Activated B cell treated with CpG ODN at 0.5 μM for 24 hours (primary cell): ENCODE measurements at regions of chr2 and their contacts with region 1.

Region 1: GRCh38 chr2:96305091-96305978 is at the start of gene SNRNP200:
- DNase-seq: peak; percentile 84
- ATAC-seq: peak; percentile 95
- H3K4me3 Mint-ChIP-seq: peak within 1 kb of the TSS; percentile 97
- H3K27ac Mint-ChIP-seq: peak within 1 kb of the TSS; percentile 97
- H3K4me1 Mint-ChIP-seq: peaks cover 45% of the 10 kb centered on the region
- H3K27me3 Mint-ChIP-seq: no peaks in the 10 kb centered on the region
- CTCF ChIP-seq: no peak
- total RNA-seq, gene SNRNP200: 185 and 208 TPM in 2 replicates

Region 2: GRCh38 chr2:96320728-96321622 is 15.6 kb after region 1 on chr2:
- CTCF ChIA-PET with region 1: interaction called, 3 read pairs
- POLR2A ChIA-PET with region 1: interaction called, 44 read pairs
- intact Hi-C with region 1: loop called (anchors 1 kb)
- DNase-seq: peak; percentile 34
- ATAC-seq: peak; percentile 15
- H3K4me3 Mint-ChIP-seq: peak overlapping the region; percentile 94
- H3K27ac Mint-ChIP-seq: peak overlapping the region; percentile 85
- H3K4me1 Mint-ChIP-seq: peaks cover 55% of the 10 kb centered on the region
- H3K27me3 Mint-ChIP-seq: no peaks in the 10 kb centered on the region
- CTCF ChIP-seq: no peak

Region 3: GRCh38 chr2:96330407-96330806 is 25.1 kb after region 1 on chr2:
- CTCF ChIA-PET with region 1: interaction called, 3 read pairs
- POLR2A ChIA-PET with region 1: interaction called, 15 read pairs
- intact Hi-C with region 1: loop called (anchors 1 kb)
- DNase-seq: no peak
- ATAC-seq: no peak
- H3K4me3 Mint-ChIP-seq: no peak overlapping the region
- H3K27ac Mint-ChIP-seq: no peak overlapping the region
- H3K4me1 Mint-ChIP-seq: peaks cover 30% of the 10 kb centered on the region
- H3K27me3 Mint-ChIP-seq: no peaks in the 10 kb centered on the region
- CTCF ChIP-seq: no peak

Region 4: DNA sequence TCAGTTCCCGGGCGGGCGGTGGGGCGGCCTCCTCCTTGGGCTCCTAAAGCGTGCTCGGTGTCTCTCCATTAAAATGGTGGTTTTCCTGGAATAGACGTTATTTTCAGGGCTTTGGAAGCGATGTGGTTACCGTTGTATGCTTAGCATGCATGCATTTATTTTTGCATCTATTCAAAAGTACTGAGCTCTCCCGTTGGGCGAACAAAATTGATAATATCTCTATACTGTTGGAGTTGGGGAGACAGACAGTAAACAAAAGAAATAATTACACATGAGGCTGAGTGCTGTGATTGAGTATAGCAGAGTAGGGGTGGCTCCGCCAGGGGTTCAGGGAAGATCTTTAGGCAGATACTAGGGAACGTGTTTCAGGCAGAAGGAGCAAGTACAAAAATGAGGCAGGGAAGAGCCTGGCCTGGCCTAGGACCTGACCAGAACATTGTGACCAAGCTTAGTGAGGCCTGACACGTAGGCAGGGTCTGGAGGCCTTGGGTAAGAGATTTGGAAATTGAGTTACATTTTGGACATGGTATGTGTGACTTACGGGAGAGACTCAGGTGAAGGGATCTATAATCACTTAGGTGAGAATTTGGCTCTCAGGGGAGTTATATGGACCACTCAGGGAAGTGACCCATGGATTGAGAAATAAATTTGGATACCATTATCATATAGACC is 30.9 kb after region 1 on chr2:
- CTCF ChIA-PET with region 1: no interaction called
- POLR2A ChIA-PET with region 1: interaction called, 15 read pairs
- intact Hi-C with region 1: loop called (anchors 1 kb)
- DNase-seq: no peak
- ATAC-seq: no peak
- H3K4me3 Mint-ChIP-seq: peak overlapping the region; percentile 87
- H3K27ac Mint-ChIP-seq: peak overlapping the region; percentile 91
- H3K4me1 Mint-ChIP-seq: peaks cover 36% of the 10 kb centered on the region
- H3K27me3 Mint-ChIP-seq: no peaks in the 10 kb centered on the region
- CTCF ChIP-seq: no peak

Region 5: DNA sequence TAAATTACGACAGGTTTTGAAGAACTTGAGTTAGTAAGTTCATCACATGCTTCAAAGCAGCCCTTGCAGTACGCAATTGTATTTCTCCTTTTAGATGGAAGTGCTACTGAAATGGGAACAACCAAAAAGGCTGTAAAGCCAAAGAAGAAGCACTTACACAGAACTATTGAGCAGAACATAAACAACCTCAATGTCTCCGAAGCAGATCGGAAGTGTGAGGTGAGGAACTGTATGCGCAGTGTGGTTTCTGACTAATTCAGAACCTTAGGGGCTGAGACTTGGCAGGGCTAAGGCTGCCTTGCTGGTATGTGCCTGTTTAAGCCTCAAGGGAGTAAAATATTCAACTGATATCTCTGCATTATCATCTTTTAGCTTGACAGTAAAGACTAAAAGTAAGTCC is 38.7 kb after region 1 on chr2:
- CTCF ChIA-PET with region 1: no interaction called
- POLR2A ChIA-PET with region 1: interaction called, 12 read pairs
- intact Hi-C with region 1: loop called (anchors 2 kb)
- DNase-seq: no peak
- ATAC-seq: peak; percentile 99
- H3K4me3 Mint-ChIP-seq: no peak overlapping the region
- H3K27ac Mint-ChIP-seq: peak overlapping the region; percentile 82
- H3K4me1 Mint-ChIP-seq: peaks cover 41% of the 10 kb centered on the region
- H3K27me3 Mint-ChIP-seq: no peaks in the 10 kb centered on the region
- CTCF ChIP-seq: no peak

Region 6: GRCh38 chr2:96485751-96486651 is 180.7 kb after region 1 on chr2:
- CTCF ChIA-PET with region 1: no interaction called
- POLR2A ChIA-PET with region 1: no interaction called
- intact Hi-C with region 1: loop called (anchors 5 kb)
- DNase-seq: peak; percentile 54
- ATAC-seq: peak; percentile 91
- H3K4me3 Mint-ChIP-seq: peak overlapping the region; percentile 91
- H3K27ac Mint-ChIP-seq: peak overlapping the region; percentile 96
- H3K4me1 Mint-ChIP-seq: peaks cover 24% of the 10 kb centered on the region
- H3K27me3 Mint-ChIP-seq: peaks cover 2% of the 10 kb centered on the region
- CTCF ChIP-seq: no peak

Region 7: GRCh38 chr2:96760036-96760985 is 455.0 kb after region 1 on chr2 and contains the start of gene CNNM4:
- CTCF ChIA-PET with region 1: no interaction called
- POLR2A ChIA-PET with region 1: no interaction called
- intact Hi-C with region 1: loop called (anchors 2 kb)
- DNase-seq: peak; percentile 89
- ATAC-seq: peak; percentile 91
- H3K4me3 Mint-ChIP-seq: peak within 1 kb of the TSS; percentile 90
- H3K27ac Mint-ChIP-seq: peak within 1 kb of the TSS; percentile 89
- H3K4me1 Mint-ChIP-seq: peaks cover 49% of the 10 kb centered on the region
- H3K27me3 Mint-ChIP-seq: no peaks in the 10 kb centered on the region
- CTCF ChIP-seq: no peak
- total RNA-seq, gene CNNM4: 7.4 and 10.0 TPM in 2 replicates